Right ventricle myocardium superior (tissue), 1 donor: ENCODE measurements at regions of chr3 and their contacts with region 1.

Region 1: GRCh38 chr3:20039766-20040475 is at the start of gene KAT2B:
- DNase-seq: peak; percentile 86
- ATAC-seq: peak; percentile 76
- total RNA-seq, gene KAT2B: 117 TPM

Region 2: GRCh38 chr3:19946832-19947548 is 92.9 kb before region 1 on chr3 and contains the start of gene RAB5A:
- intact Hi-C with region 1: loop called (anchors 5 kb)
- DNase-seq: peak; percentile 98
- ATAC-seq: peak; percentile 99
- total RNA-seq, gene RAB5A: 52.6 TPM

Region 3: DNA sequence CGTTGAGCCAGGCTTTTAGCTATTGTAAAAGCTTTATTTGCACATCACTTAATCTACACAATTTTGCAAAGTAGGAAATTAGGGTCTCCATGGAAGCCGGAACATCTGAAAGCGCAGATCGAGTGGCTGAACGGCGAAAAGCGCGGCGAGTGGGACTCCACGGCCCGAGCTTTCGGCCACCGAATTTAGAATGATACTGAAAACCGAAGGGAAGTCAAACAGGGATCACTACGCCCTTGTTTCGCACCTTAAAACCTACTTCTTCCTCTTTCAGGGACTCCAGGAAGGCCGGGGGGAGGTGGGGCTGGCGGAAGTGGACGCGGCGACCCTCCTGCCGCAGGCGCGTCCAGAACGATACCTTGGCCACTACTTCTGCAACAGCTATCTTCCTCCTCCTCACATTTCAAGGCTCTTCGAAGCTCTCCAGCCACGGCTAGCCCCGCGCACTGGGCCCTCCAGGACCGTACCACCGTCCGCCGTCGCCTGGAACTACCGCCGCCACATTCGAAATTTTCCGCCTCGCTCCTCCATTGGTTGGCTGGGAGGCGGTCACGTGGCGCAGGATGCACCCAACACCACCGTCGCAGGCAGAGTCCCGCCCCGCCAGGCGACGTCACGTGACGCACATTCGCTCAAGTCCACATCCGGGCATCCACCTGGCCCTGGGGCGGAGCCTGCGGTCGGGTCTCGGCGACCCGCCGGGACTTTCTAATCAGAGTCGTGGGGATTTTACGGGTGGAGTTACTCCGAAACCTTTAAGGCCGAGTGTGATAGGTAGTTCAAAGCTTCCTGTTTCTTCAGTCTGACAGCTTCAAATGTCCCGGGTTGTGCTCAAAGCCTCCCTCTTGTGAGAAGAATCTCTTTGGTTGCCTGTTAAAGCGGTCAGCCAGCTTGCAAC is 146.0 kb after region 1 on chr3 and contains the start of gene SGO1:
- intact Hi-C with region 1: loop called (anchors 10 kb)
- DNase-seq: peak; percentile 100
- ATAC-seq: peak; percentile 99
- total RNA-seq, gene SGO1: 0.59 TPM

Region 4: DNA sequence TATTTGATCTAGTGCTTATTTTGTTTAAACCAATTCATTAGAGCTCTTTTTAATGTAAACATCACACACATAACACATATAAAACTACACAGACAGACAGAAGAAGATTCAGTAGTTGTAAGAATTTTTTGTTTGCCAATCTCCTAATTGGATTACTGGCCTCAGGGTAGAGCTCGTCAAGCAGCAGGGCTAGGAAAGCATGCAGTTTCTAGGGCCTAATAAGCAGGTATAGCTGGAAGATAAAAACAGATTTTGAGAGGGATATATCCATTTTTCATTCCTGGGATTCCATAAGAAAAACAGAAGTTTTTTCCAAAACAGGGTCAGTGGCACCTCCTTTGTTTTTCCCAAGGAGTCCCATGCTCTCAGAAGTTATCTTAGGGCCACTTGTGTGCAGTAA is 411.2 kb after region 1 on chr3:
- intact Hi-C with region 1: no loop called
- DNase-seq: no peak
- ATAC-seq: no peak